ENCODE measurements at regions of chr3 and their contacts with region 1.

Region 1: GRCh38 chr3:32502118-32502945 is at the start of gene CMTM6:
- DNase-seq: peak; percentile 80
- H3K4me3 Mint-ChIP-seq: peak within 1 kb of the TSS; percentile 96
- H3K27ac Mint-ChIP-seq: peak within 1 kb of the TSS; percentile 93
- H3K4me1 Mint-ChIP-seq: peaks cover 41% of the 10 kb centered on the region
- H3K27me3 Mint-ChIP-seq: no peaks in the 10 kb centered on the region
- total RNA-seq, gene CMTM6: 89.5 to 91.8 TPM

Region 2: GRCh38 chr3:32391643-32392535 is 110.4 kb before region 1 on chr3 and contains the start of gene CMTM7:
- CTCF ChIA-PET with region 1: interaction called, 4 read pairs
- POLR2A ChIA-PET with region 1: interaction called, 10 read pairs
- DNase-seq: peak; percentile 74
- H3K4me3 Mint-ChIP-seq: peak within 1 kb of the TSS; percentile 97
- H3K27ac Mint-ChIP-seq: peak within 1 kb of the TSS; percentile 90
- H3K4me1 Mint-ChIP-seq: peaks cover 52% of the 10 kb centered on the region
- H3K27me3 Mint-ChIP-seq: no peaks in the 10 kb centered on the region
- total RNA-seq, gene CMTM7: 47.0 to 47.3 TPM

Region 3: GRCh38 chr3:32443478-32443877 is 58.9 kb before region 1 on chr3:
- CTCF ChIA-PET with region 1: no interaction called
- POLR2A ChIA-PET with region 1: no interaction called
- DNase-seq: peak; percentile 11
- H3K4me3 Mint-ChIP-seq: no peak overlapping the region
- H3K27ac Mint-ChIP-seq: peak overlapping the region; percentile 34
- H3K4me1 Mint-ChIP-seq: peaks cover 49% of the 10 kb centered on the region
- H3K27me3 Mint-ChIP-seq: no peaks in the 10 kb centered on the region

Region 4: DNA sequence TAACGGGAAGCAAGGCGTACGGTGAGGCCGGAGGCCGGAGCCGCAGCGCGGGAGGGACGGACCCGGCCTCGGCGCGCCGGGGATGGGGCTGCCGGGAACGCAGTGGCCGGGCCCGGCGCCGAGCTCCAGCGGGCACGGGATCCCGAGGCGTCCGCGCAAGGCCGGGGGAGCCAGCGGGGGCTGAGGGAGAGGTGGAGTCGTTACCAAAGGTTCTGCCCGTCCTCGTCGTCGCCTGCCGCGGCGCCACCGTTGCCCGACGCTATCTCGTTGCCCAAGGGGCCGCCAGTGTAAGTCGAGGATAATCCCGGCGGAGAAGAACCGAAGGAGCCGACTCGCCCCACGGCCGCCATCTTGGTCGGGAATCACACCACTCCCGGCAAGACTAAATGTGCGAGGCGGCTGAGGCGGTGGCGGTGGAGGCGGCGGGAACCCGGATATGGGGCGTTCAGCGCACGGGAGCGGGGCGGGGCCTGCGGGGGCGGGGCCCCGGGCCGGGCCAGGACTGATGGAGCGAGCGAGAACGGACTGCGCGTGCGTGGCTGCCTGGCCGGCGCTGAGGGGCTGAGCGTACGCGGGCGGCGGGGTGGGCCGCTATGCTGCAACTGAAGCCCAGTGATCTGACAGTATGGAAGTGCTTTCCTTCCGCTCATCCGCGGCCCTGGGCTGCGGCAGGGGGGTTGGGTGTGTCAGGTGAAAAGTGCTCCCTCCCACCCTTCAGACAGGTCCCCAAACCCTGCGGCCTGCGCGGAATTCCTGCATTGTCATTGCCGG is 68.3 kb after region 1 on chr3 and contains the start of gene DYNC1LI1:
- CTCF ChIA-PET with region 1: no interaction called
- POLR2A ChIA-PET with region 1: interaction called, 13 read pairs
- DNase-seq: peak; percentile 93
- H3K4me3 Mint-ChIP-seq: peak within 1 kb of the TSS; percentile 90
- H3K27ac Mint-ChIP-seq: peak within 1 kb of the TSS; percentile 78
- H3K4me1 Mint-ChIP-seq: peaks cover 31% of the 10 kb centered on the region
- H3K27me3 Mint-ChIP-seq: no peaks in the 10 kb centered on the region
- total RNA-seq, gene DYNC1LI1: 29.7 to 31.7 TPM